Dendritic cell treated with granulocyte-macrophage colony-stimulating factor and Interleukin-4, amounts not matched to agents 40 ng/mL and 50 ng/mL, for 4 days (primary cell): ENCODE measurements at regions of chr9 and their contacts with region 1.

Region 1: DNA sequence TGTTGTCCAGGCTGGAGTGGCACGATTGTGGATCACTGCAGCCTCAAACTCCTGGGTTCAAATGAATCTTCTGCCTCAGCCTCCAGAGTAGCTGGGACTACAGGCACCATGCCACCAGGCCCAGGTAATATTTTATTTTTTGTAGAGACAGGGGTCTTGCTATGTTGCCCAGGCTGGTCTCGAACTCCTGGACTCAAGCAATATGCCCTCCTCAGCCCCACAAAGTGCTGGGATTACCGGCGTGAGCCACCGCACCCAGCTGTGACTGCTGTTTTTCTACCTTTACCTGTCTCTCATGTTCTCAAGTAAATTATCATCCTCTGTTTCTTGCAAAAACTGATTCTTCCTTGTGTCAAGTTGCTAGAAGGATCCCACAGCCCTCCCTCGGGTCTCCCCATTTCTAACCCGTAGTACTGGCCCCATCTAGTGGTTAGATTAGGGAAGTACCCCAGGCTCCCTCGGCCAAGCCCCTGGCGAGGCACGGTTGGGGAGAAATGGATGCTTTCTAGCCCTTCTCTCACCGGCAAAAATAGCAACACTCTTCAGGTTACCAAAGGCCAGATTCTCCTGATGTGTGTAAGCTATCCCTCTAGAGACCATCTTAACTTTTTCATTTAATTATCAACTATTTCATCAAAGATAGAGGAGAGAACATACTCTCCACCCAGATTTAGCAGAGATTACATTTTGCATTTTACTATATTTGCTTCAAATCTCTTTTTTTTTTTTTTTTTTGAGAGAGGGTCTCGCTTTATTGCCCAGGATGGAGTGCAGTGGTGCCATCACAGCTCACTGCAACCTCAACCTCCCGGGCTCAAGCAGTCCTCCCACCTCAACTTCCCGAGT is 19.2 kb upstream of the TOR1B start:
- H3K4me3 Mint-ChIP-seq: no peak overlapping the region
- H3K27ac Mint-ChIP-seq: no peak overlapping the region
- H3K4me1 Mint-ChIP-seq: peaks cover 17% of the 10 kb centered on the region
- H3K27me3 Mint-ChIP-seq: peaks cover 26% of the 10 kb centered on the region

Region 2: GRCh38 chr9:129139993-129140396 is 643.7 kb before region 1 on chr9:
- intact Hi-C with region 1: loop called (anchors 10 kb)
- H3K4me3 Mint-ChIP-seq: peak overlapping the region; percentile 77
- H3K27ac Mint-ChIP-seq: peak overlapping the region; percentile 96
- H3K4me1 Mint-ChIP-seq: peaks cover 59% of the 10 kb centered on the region
- H3K27me3 Mint-ChIP-seq: no peaks in the 10 kb centered on the region

Region 3: DNA sequence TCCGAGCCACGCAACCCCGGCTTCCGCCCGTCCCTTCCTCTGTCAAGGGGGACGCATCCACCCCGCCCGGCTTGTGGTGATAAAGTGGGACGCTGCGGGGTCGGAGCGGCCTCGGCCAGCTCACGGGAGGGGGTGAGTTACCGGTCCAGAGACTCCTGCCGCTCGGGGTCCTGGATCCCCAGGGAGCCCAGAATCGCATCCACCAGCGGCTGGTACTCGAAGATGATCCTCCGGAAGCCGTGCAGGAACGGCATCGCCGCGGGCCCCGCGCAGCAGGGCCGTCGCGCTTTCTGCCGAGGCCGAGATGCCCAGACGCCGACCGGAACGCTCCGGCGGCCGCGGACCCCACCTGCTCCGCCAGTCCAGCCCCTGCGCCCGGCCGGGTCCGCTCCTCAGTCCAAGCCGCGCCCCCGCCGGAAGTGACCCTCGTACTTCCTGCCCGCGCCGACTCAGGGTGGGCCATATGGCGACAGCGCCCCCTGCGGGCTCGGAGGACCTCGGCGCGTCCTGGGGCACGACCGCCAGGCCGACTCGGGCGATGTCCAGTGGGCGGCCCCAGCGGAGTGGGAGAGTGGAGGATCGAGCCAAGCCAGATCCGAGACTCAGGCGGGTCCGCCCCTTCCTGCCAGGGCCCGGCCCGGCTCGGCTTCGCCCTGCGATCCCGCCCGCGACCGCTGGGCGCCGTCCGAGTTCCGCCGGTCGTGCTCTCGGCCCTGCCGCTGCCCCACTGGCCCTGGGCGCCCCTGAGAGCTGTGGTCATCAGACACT is 141.8 kb before region 1 on chr9 and contains the start of gene ASB6:
- intact Hi-C with region 1: loop called (anchors 2 kb)
- H3K4me3 Mint-ChIP-seq: peak within 1 kb of the TSS; percentile 90
- H3K27ac Mint-ChIP-seq: peak within 1 kb of the TSS; percentile 82
- H3K4me1 Mint-ChIP-seq: peaks cover 48% of the 10 kb centered on the region
- H3K27me3 Mint-ChIP-seq: peaks cover 4% of the 10 kb centered on the region

Region 4: DNA sequence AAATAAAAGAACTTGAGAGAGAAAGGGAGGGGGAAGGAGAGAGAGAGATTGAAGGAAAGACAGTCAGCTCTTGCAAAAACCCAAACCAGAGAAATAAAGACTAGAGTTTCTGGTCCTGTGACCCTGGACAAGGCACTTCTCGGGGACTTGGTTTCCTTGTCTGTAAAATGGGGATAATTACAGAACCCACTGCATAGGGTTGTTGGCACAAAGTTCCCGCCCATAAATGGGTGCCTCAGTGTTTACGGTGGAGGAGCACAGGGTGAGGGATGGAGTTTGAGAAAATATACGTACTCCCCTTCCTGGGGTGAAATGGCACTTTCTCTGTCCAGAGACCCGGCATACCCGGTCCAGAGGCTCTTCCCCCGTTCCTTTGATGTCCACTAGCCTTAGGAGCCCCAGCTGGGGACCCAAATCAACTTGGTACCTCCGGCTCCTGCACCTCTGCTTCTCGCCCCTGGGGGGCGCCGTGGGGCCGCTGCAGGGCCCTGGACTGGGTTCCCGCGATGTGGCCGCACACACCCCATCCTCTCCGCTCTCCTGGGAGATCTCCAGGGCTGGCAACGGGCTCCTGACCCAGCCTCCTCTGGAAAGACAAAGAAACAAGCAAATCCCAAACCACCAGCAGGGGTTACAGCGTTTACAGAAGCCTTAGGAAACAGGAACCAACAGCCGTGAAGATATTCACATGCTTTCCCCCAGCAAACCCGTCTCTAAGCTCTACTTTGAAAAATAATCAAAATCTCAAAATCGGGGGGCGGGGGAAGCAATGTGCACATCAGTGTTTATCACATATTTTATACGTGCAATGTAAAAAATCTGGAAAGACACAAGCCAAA is 57.2 kb before region 1 on chr9:
- intact Hi-C with region 1: loop called (anchors 2 kb)
- H3K4me3 Mint-ChIP-seq: peak overlapping the region; percentile 53
- H3K27ac Mint-ChIP-seq: no peak overlapping the region
- H3K4me1 Mint-ChIP-seq: peaks cover 11% of the 10 kb centered on the region
- H3K27me3 Mint-ChIP-seq: peaks cover 43% of the 10 kb centered on the region

Region 5: DNA sequence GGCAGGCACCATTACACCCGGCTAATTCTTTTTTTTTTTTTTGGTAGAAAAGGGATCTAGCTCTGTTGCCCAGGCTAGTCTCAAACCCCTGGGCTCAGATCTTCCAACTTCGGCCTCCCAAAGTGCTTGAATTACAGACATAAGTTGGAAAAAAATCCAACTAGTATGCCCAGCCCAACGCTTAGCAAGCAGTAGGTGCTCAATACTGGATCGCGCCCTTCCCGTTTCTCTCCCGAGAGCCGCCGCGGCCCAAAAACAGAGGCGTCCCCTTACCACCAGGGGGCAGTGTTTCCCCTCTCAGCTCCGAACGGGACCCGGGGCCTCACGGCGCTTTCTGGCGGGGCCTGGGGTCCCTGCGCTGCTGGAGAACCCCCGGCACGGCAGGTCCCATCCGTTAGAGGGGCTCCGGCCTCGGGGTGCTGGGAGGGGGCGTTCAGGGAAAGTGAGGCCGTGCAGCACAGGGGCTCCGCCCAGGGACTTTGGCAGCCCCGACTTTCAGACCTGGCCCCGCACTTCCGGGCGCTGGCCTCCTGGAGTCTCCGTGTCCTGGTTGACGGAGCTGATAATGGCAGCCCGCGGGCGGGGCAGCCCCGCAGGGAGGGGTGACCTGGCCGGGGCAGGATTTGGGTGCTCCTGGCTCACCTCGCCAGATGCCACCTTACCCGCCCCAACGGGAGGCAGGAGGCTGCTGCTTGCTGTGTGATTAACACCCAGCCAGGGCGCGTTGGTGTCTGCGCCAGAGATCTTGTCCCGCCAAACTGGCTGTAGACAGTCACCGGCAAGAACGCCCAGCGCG is 46.1 kb before region 1 on chr9:
- intact Hi-C with region 1: loop called (anchors 1 kb)
- H3K4me3 Mint-ChIP-seq: peak overlapping the region; percentile 79
- H3K27ac Mint-ChIP-seq: peak overlapping the region; percentile 74
- H3K4me1 Mint-ChIP-seq: peaks cover 9% of the 10 kb centered on the region
- H3K27me3 Mint-ChIP-seq: peaks cover 64% of the 10 kb centered on the region